Breast epithelium (tissue), 4 donors: ENCODE measurements at regions of chr4 and their contacts with region 1.

Region 1: DNA sequence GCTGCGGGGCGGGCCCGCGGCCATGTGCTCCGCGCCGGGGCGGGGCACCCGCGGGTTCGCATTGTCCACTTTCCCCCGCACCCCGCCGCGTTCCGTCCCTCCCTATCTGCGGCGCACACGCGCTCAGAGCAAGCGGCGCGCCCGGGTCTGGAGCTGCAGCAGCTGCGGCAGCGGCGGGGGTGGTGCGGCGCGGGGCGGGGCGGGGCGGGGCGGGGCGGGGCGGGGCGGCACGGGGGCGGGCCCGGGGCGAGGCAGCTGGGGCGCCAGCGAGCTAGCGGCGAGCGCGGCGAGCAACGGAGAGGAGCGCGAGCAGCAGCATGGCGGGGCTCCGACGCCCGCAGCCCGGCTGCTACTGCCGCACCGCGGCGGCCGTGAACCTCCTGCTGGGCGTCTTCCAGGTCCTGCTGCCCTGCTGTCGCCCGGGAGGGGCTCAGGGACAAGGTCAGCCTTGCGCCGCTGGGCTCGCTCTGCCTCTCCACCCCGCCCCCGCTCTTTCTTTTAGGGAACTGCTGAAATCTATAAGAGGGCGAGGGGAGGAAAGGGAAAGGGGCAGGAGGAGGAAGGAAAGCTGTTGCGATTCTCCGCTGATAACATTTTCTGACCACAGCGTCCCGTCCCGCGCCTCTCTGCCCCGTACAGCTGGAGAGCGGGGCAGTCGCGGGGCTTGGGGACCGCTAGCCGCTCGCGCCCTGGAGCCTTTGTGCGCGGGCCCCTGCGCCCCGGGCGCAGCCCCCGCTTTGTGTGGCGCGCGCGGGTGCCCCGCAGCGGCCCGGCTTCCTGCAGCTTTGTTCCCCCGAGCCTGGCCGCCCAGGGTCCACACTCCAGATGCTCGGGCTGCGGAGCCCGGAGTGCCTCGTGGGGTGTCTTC is at the start of gene TMEM131L:
- DNase-seq: peak in 1 of 2 donors; percentile 45
- H3K4me3 ChIP-seq: peak within 1 kb of the TSS; percentile 72 to 90 (median 87)
- H3K27ac ChIP-seq: peak within 1 kb of the TSS; percentile 68 to 85
- H3K4me1 ChIP-seq: peaks cover 0 to 4% of the 10 kb centered on the region in 2 donors
- H3K27me3 ChIP-seq: no peaks in the 10 kb centered on the region
- CTCF ChIP-seq: peak in 1 of 3 donors; percentile 18
- POLR2A ChIP-seq: no peak
- total RNA-seq, gene TMEM131L: 18.7 to 22.0 (median 19.5) TPM

Region 2: DNA sequence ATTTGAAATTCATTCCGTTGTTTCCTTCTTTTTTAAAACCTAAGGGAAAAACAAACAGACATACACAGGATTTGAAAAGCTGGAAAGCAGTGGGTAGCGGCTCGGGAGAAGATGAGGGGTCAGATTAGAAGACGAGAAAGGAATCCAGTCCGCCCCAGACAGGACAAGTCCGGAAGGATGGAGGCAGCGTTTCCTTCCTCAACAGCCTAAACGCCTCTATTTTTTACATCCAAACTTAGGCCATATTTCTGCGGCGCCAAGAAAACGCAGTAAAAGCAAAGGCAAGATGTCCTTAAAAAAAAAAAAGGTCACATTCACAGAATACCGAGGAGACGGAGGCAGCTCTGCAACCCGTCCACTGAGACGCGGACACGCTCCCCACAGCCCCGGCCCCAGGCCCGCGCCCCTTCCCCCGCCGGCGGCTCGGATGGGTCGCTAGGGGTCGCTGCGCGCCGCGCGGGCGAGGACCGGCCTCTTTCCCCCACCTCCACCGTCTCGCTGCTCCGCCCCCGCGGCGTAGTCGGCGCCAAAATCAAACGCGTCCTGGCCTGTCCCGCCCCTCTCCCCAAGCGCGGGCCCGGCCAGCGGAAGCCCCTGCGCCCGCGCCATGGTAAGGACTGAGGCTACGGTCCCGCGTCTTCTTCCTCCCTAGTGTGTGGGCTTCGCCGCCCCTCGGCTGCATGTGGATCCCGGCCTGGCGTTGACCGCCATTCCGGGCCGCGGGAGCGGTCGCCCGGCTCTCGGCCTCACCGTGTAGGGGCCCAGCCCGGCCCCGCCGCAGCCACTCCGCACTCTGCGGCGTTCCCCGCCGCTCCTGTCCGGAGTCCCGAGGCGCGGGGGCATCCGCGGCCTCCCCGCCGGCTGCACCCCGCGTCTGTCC is 121.9 kb before region 1 on chr4 and contains the start of gene MND1:
- intact Hi-C with region 1: no loop called
- DNase-seq: peak; percentile 58 to 81
- H3K4me3 ChIP-seq: peak within 1 kb of the TSS; percentile 71 to 85 (median 78)
- H3K27ac ChIP-seq: no peak within 1 kb of the TSS
- H3K4me1 ChIP-seq: no peaks in the 10 kb centered on the region
- H3K27me3 ChIP-seq: no peaks in the 10 kb centered on the region
- CTCF ChIP-seq: peak in 2 of 3 donors; percentile 68 to 71
- POLR2A ChIP-seq: no peak
- total RNA-seq, gene MND1: 0.64 TPM in 1 of 3 donors, not detected in the others

Region 3: DNA sequence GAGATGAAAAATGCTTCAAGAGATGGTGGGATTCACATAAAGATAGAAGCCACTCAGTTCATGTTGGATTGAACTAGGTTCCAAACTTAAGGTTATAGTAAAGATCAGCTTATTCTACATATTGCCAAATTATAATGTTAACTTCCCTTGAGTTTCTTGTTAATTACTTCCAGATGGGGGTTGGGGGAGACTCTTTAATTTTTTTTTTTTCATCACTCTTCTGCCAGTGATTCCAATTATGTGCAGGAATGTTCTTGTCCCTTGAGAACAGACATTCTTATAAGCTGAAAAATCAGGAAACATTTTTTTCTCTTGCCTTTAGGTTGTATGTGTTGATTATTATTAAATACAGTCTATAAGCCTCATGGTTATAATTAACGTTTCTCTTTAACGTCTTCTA is 91.9 kb before region 1 on chr4:
- intact Hi-C with region 1: no loop called
- DNase-seq: no peak
- H3K4me3 ChIP-seq: no peak overlapping the region
- H3K27ac ChIP-seq: no peak overlapping the region
- H3K4me1 ChIP-seq: no peaks in the 10 kb centered on the region
- H3K27me3 ChIP-seq: no peaks in the 10 kb centered on the region
- CTCF ChIP-seq: no peak
- POLR2A ChIP-seq: no peak

Region 4: GRCh38 chr4:153573881-153574802 is 107.8 kb after region 1 on chr4:
- intact Hi-C with region 1: loop called (anchors 10 kb)
- DNase-seq: peak in 1 of 2 donors; percentile 60
- H3K4me3 ChIP-seq: no peak overlapping the region
- H3K27ac ChIP-seq: no peak overlapping the region
- H3K4me1 ChIP-seq: peaks cover 0 to 4% of the 10 kb centered on the region in 2 donors
- H3K27me3 ChIP-seq: no peaks in the 10 kb centered on the region
- CTCF ChIP-seq: peak in 2 of 3 donors; percentile 54 to 57
- POLR2A ChIP-seq: no peak

Region 5: DNA sequence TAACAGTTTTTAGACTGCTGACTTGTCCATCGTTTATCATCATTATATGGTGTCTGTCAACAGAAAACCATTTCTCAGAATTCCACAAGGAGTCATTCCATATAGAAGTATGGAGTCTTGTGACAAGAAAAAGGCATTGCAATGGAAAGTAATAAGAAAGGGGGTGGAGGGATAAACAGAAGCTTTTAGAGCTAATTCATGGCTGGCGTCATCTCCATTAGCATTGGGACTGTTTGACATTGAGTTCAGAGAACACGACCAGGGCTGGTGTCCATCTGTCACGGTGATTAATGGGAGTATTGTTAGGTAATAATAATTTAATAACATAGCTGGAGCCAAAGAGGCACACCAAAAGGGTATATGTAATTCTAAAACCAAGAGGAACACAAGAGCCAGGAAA is 424.4 kb after region 1 on chr4:
- intact Hi-C with region 1: no loop called
- DNase-seq: no peak
- H3K4me3 ChIP-seq: no peak overlapping the region
- H3K27ac ChIP-seq: no peak overlapping the region
- H3K4me1 ChIP-seq: no peaks in the 10 kb centered on the region
- H3K27me3 ChIP-seq: no peaks in the 10 kb centered on the region
- CTCF ChIP-seq: no peak
- POLR2A ChIP-seq: no peak